ENCODE measurements at regions of chr16 and their contacts with region 1.

Region 1: GRCh38 chr16:74862741-74863244 is 88.2 kb upstream of the FA2H start:
- DNase-seq: peak in 4 of 5 donors; percentile 41 to 56 (median 46)
- H3K4me3 ChIP-seq: no peak overlapping the region
- H3K4me3 Mint-ChIP-seq: no peak overlapping the region
- H3K27ac ChIP-seq: no peak overlapping the region
- H3K27ac Mint-ChIP-seq: peak overlapping the region in 4 of 7 donors; percentile 57 to 77 (median 62)
- H3K4me1 ChIP-seq: peaks cover 7% of the 10 kb centered on the region
- H3K4me1 Mint-ChIP-seq: peaks cover 7 to 17% (median 11%) of the 10 kb centered on the region in 4 donors
- H3K27me3 ChIP-seq: no peaks in the 10 kb centered on the region
- H3K27me3 Mint-ChIP-seq: no peaks in the 10 kb centered on the region

Region 2: GRCh38 chr16:74521691-74522090 is 341.1 kb before region 1 on chr16:
- CTCF ChIA-PET with region 1: no interaction called
- POLR2A ChIA-PET with region 1: no interaction called
- intact Hi-C with region 1: no loop called
- DNase-seq: no peak
- H3K4me3 ChIP-seq: no peak overlapping the region
- H3K4me3 Mint-ChIP-seq: no peak overlapping the region
- H3K27ac ChIP-seq: no peak overlapping the region
- H3K27ac Mint-ChIP-seq: peak overlapping the region in 4 of 7 donors; percentile 25 to 50 (median 30)
- H3K4me1 ChIP-seq: no peaks in the 10 kb centered on the region
- H3K4me1 Mint-ChIP-seq: peaks cover 14 to 42% (median 24%) of the 10 kb centered on the region in 4 donors
- H3K27me3 ChIP-seq: no peaks in the 10 kb centered on the region
- H3K27me3 Mint-ChIP-seq: no peaks in the 10 kb centered on the region

Region 3: DNA sequence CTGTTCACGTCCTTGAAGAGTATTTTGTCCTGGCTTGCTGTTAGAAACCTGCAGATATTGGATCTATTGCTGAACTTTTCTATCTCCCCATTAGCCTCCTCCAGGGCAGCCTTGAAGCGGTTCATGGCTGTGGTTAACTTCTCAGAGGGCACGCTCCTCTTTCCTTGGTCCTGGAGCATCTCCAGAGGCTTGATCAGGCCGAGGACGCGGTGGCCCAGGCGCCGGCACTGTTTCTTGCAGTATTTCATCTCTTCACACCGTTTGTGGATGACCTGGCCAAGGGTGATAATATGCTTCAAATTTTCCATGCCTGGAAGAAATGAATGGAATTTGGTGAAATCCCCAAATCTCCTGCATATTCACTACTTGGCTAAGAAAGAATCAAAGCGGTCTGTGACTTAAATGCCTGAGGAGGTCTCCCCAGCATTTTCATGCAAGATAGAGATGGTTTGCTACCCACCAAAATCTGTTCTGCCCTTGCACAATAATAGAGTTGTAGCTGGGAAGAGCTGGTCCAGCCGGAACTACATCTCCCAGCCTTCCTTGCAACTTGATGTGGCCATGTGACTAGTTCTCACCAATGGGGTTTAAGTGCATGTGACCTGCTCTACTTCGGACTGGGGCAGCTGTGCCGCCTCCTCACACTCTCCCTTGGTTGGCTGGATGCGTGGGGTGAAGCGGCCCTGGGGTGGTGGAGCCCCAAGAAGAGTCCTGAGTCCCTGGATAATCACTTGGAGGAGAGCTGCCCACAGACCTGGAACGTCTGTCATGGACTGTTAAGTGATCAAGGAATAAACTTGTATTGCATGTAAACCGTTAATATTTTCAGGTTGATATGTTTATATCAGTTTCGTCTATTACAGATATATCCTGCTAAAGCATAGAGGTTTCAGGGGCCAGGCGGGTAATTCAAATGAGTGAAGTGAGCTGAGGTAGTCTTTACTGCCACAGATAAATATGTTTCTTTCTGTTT is 167.1 kb before region 1 on chr16:
- CTCF ChIA-PET with region 1: interaction called, 18 read pairs
- POLR2A ChIA-PET with region 1: interaction called, 9 read pairs
- intact Hi-C with region 1: no loop called
- DNase-seq: peak; percentile 63 to 72 (median 67)
- H3K4me3 ChIP-seq: peak overlapping the region; percentile 24 to 46
- H3K4me3 Mint-ChIP-seq: peak overlapping the region; percentile 79 to 88 (median 86)
- H3K27ac ChIP-seq: peak overlapping the region; percentile 0
- H3K27ac Mint-ChIP-seq: peak overlapping the region; percentile 53 to 90 (median 84)
- H3K4me1 ChIP-seq: peaks cover 34% of the 10 kb centered on the region
- H3K4me1 Mint-ChIP-seq: peaks cover 31 to 66% (median 48%) of the 10 kb centered on the region in 4 donors
- H3K27me3 ChIP-seq: no peaks in the 10 kb centered on the region
- H3K27me3 Mint-ChIP-seq: no peaks in the 10 kb centered on the region

Region 4: DNA sequence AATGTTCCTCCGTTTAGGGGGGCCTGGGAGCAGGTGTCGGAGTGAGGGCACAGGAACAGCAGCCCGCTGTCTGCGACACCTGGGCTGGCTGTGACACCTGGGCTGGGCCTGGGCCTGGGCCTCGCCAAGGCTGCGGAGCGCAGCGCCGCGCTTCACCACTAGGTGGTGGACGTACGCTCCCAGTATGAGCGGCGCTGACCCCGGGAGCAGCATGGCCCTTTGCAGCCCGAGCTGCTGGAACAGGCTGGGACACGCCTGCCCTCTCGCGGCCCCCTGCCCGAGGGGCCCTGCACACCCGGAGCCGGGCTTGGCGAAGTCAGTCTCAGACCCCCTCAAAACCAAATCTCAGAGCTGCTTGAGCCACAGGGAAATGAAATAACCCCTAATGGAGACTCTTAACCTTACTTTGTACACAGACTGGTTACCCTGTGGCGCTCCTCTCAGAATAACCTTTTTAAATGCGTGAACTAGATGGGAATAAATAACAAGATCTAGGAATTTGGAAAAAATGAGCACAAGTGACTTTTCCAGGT is 49.6 kb before region 1 on chr16:
- CTCF ChIA-PET with region 1: interaction called, 89 read pairs
- POLR2A ChIA-PET with region 1: no interaction called
- intact Hi-C with region 1: loop called (anchors 1 kb)
- DNase-seq: peak; percentile 51 to 72 (median 60)
- H3K4me3 ChIP-seq: no peak overlapping the region
- H3K4me3 Mint-ChIP-seq: peak overlapping the region in 3 of 8 donors; percentile 10 to 47 (median 46)
- H3K27ac ChIP-seq: no peak overlapping the region
- H3K27ac Mint-ChIP-seq: no peak overlapping the region
- H3K4me1 ChIP-seq: peaks cover 4% of the 10 kb centered on the region
- H3K4me1 Mint-ChIP-seq: no peaks in the 10 kb centered on the region
- H3K27me3 ChIP-seq: no peaks in the 10 kb centered on the region
- H3K27me3 Mint-ChIP-seq: peaks cover 2 to 4% of the 10 kb centered on the region in 2 donors

Region 5: DNA sequence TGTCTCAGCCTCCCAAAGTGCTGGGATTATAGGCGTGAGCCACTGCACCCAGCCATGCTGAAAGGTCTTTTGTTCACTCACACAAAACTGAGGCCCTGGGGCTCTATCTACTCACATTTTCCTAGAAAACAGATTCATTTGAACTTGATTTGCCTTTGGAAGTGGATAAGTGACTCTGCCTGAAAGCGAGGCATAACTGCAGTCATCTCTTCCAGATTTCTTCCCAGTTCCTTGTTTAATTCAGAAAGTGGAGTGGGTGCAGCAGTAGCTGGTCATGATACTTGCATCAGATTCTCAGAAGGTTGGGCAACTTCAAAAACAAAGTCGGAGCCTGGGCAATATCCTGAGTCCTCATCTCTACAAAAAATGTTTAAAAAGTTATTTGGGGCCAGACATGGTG is 29.4 kb before region 1 on chr16:
- CTCF ChIA-PET with region 1: interaction called, 10 read pairs
- POLR2A ChIA-PET with region 1: no interaction called
- intact Hi-C with region 1: no loop called
- DNase-seq: no peak
- H3K4me3 ChIP-seq: no peak overlapping the region
- H3K4me3 Mint-ChIP-seq: no peak overlapping the region
- H3K27ac ChIP-seq: no peak overlapping the region
- H3K27ac Mint-ChIP-seq: no peak overlapping the region
- H3K4me1 ChIP-seq: no peaks in the 10 kb centered on the region
- H3K4me1 Mint-ChIP-seq: no peaks in the 10 kb centered on the region
- H3K27me3 ChIP-seq: no peaks in the 10 kb centered on the region
- H3K27me3 Mint-ChIP-seq: peaks cover 6 to 12% of the 10 kb centered on the region in 2 donors

Region 6: DNA sequence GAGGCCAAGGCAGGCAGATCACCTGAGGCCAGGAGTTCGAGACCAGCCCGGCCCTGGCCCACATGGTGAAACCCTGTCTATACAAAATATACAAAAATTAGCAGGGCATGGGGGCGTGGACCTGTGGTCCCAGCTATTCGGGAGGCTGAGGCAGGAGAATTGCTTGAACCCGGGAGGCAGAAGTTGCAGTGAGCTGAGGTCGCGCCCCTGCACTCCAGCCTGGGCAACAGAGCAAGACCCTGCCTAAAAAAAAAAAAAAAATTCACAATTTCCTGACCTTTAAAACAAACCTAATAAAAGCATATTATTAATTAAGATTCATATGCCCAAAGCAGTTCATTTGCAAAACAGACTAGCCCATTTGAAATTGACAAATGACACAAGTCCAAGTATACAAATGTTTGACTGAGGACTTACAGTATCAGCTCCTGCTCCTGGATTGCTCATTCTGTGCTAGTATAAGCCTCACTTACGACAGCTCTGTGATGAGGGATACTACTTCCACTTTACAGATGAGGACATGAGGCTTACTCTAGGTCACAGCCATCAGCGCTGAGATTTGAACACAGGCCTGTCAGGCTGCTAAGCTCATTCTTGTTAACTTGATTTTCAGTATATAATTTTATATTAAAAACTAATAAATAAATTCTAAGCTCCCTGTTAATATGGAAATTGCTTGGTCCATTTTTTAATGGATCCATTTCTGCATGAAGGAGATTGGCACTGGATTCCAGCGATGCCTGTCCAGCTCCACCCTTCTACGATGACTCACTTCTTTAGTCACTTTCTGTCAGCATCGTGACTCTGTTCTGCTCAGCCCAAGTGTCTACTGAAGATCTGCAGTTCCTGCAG is 33.8 kb after region 1 on chr16:
- CTCF ChIA-PET with region 1: interaction called, 13 read pairs
- POLR2A ChIA-PET with region 1: no interaction called
- intact Hi-C with region 1: no loop called
- DNase-seq: no peak
- H3K4me3 ChIP-seq: no peak overlapping the region
- H3K4me3 Mint-ChIP-seq: no peak overlapping the region
- H3K27ac ChIP-seq: no peak overlapping the region
- H3K27ac Mint-ChIP-seq: peak overlapping the region in 5 of 7 donors; percentile 13 to 64 (median 31)
- H3K4me1 ChIP-seq: no peaks in the 10 kb centered on the region
- H3K4me1 Mint-ChIP-seq: peaks cover 0 to 5% (median under 1%) of the 10 kb centered on the region in 4 donors
- H3K27me3 ChIP-seq: no peaks in the 10 kb centered on the region
- H3K27me3 Mint-ChIP-seq: no peaks in the 10 kb centered on the region